BJ (cell line): ENCODE measurements at regions of chr6 and their contacts with region 1.

Region 1: GRCh38 chr6:42260972-42261371 is 43.3 kb upstream of the MRPS10 start:
- DNase-seq: no peak
- H3K4me3 ChIP-seq: no peak overlapping the region
- H3K27me3 ChIP-seq: no peaks in the 10 kb centered on the region
- CTCF ChIP-seq: peak; percentile 61

Region 2: GRCh38 chr6:41984623-41985022 is 276.3 kb before region 1 on chr6:
- CTCF ChIA-PET with region 1: no interaction called
- POLR2A ChIA-PET with region 1: no interaction called
- DNase-seq: no peak
- H3K4me3 ChIP-seq: no peak overlapping the region
- H3K27me3 ChIP-seq: no peaks in the 10 kb centered on the region
- CTCF ChIP-seq: no peak

Region 3: DNA sequence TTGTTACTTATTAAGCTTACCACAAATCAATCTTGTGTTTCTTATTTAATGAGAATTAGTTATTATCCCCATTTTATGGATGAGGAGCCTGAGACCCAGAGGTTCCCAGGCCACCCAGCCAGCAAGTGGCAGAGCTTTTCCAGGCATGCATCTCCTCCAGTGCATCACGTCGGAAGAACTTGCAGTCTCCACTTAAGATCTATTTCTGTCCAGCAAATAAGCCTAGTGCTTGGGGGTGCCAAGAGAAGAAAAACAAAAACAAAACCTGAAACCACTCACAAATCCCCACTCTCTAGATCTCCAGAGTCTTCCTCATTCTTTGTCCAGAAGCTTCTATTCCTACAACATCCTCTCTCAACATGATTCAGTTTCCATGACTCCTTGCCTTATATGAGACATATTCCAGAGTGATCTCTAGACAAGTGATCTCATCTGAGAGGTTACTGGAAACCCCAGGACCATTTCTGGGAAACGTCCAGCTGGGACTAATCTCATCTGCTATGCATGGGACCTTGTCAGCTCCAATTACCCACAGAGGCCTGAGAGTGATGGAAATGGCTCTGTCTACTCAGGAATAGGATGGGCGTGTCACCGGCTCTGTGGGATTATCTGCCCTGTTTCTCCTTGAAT is 70.3 kb before region 1 on chr6:
- CTCF ChIA-PET with region 1: no interaction called
- POLR2A ChIA-PET with region 1: no interaction called
- DNase-seq: no peak
- H3K4me3 ChIP-seq: no peak overlapping the region
- H3K27me3 ChIP-seq: no peaks in the 10 kb centered on the region
- CTCF ChIP-seq: no peak

Region 4: DNA sequence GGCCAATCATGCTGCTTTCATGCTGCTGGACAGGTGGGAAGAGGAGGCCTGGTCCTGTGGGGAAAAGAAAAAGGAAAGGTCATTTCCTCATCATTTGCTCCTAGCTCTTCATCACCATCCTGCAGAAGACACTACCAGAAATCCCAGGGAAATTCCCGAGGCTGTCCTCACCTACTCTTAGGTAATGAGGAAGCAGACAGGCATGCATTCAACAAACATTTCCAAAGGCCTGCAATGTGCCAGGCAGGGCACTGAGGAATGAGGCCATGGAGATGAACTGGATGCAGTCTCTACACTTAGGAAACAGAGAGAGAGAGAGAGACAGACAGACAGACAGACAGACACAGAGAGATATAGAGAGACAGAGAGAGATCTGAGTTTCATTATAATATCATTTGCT is 39.7 kb after region 1 on chr6:
- CTCF ChIA-PET with region 1: interaction called, 10 read pairs
- POLR2A ChIA-PET with region 1: no interaction called
- DNase-seq: no peak
- H3K4me3 ChIP-seq: no peak overlapping the region
- H3K27me3 ChIP-seq: no peaks in the 10 kb centered on the region
- CTCF ChIP-seq: no peak

Region 5: DNA sequence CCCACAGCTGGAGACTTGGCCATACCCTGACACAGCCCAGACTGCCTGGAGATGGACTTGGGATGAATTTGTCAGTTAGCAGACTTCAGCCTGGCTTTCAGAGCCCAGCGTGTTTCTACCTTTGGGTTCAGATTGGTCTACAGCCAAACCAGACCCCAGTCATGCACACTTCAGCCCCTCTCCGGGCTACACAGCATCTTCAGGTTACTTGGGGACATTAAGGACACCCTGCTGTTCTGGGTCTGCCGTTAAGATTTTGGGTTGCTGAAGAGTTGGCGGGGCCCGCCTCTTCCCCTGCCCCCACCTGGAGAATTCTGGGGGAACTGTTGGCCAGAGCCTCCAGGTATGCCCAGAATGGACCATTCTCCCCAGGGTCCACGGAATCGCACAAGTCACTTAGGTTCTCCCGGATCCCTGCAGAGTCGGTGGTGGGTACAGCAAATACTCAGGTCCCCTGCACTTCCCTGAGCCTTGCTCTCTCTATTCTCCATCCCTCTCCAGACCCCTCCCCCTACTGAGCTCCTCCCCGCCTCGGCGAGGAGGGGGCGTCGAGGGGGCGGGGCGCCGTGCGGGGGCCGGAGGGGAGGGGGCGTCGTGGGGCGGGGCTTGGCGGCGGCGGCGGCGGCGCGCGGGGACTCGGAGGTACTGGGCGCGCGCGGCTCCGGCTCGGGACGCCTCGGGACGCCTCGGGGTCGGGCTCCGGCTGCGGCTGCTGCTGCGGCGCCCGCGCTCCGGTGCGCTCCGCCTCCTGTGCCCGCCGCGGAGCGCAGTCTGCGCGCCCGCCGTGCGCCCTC is 814.9 kb after region 1 on chr6 and contains the start of gene PTK7:
- CTCF ChIA-PET with region 1: no interaction called
- POLR2A ChIA-PET with region 1: interaction called, 12 read pairs
- DNase-seq: no peak
- H3K4me3 ChIP-seq: peak within 1 kb of the TSS; percentile 79
- H3K27me3 ChIP-seq: no peaks in the 10 kb centered on the region
- CTCF ChIP-seq: no peak
- polyA plus RNA-seq, gene PTK7: 187 and 362 TPM in 2 replicates